Gastrocnemius medialis (tissue), 4 donors: ENCODE measurements at regions of chr2 and their contacts with region 1.

Region 1: DNA sequence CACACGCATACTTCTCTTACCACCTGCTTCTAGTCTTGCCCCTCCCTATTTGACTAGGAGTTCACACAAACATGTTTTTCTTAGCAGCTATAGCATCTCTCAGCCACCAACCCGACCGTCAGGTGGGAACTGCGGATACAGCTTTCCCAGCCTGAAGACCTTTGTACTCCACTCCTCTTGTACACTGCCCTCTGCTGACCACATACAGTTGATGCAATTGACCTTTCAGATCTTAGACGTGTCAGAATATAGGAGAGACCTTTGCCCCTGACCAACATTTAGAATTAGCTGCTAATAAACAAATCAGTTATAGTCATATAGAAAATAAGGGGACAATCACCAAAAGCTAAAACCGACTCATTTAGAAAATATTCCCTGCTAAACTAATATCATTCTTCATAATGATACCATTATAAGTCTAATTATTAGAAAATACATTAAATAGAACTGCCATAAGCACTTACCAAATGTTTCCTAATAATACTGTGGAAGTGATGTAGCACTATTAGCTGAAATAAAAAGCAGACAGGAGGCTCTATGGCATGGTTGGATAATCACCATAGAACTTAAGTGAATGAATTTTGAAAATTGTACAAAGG is 208.4 kb downstream of the RAD51AP2 start:
- DNase-seq: no peak
- ATAC-seq: peak in 1 of 2 donors; percentile 41
- H3K4me3 ChIP-seq: no peak overlapping the region
- H3K27ac ChIP-seq: no peak overlapping the region
- H3K4me1 ChIP-seq: no peaks in the 10 kb centered on the region
- H3K27me3 ChIP-seq: no peaks in the 10 kb centered on the region
- CTCF ChIP-seq: peak in 4 of 5 experiments; percentile 11 to 52 (median 29)
- POLR2A ChIP-seq: no peak

Region 2: DNA sequence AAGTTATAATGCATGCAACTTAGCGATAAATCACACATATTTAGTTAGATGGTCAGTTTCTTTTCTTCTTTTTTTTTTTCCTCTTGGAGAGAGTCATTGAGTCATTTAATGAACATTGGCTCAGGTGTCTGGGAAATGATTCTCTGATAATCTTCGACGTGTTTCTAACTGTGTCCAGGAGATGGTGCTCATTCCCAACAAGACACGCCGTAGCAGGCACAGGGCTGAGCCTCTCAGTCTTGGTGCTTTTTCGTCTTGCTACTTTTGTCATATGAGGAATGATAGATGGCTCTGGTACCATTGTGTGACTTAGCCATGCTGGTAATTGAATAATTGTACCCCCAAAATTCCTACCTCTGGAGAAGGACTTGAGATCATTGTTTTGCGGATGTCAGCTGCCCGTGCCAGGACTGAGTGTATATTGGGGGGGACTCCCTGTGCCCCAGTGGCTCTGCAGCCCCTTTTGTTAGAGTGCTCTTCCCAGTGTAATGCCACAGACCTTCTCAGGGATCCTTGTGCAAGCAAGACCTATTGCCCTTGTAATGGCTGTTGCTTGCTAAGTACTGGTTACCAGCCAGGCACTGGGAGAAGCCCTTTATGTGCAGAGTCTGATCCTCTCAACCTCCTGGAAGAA is 536.6 kb before region 1 on chr2:
- in situ Hi-C with region 1: loop called in 1 of 4 experiments (anchors 10 kb)
- intact Hi-C with region 1: loop called (anchors 2 kb)
- DNase-seq: no peak
- ATAC-seq: peak in 1 of 2 donors; percentile 50
- H3K4me3 ChIP-seq: no peak overlapping the region
- H3K27ac ChIP-seq: no peak overlapping the region
- H3K4me1 ChIP-seq: no peaks in the 10 kb centered on the region
- H3K27me3 ChIP-seq: no peaks in the 10 kb centered on the region
- CTCF ChIP-seq: peak in 2 of 5 experiments; percentile 24 to 29
- POLR2A ChIP-seq: no peak